ACHN (cell line): ENCODE measurements at regions of chr20 and their contacts with region 1.

Region 1: DNA sequence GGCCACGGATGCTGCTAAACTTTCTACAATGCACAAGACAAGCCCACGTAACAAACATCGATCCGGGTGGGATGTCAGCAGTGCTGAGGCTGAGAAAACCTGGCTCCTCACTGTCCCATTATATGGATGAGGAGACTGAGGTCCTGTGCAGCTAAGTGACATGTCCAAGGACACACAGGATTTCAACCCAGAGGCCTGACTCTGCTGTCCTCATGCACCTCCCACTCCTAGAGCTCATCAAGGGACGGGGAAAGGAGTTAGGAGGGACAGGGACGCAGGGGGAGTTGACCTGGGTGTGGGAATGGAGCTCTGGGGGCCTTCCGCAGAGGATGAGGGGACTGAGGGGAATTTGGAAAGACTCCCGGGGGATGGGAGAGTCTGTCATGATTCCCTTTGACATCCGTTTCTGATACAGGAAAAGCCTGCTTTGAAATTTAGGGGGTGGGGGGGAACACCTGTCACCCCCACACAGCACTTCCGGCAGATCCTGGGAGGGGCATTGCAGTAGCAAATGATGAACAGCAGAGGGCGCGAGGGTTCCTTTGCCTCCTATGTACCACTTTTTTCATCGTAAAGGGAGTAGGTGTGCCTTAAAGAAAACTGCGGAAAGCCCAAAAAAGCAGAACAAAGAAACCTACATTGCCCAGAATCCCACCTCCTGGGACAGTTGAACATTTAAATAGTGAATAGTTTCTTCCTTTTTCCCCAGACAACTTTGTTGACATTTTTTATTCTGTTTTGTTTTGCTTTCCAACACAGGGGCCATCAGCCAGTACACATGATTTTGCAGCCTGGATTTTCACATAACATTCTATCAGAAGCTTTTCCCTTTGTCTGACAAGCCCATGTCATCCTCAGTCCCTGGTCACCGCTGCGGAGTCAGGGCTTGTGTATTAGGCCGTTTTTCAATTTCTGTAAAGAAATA is 48.6 kb downstream of the SLC2A10 start:
- DNase-seq: peak; percentile 51

Region 2: DNA sequence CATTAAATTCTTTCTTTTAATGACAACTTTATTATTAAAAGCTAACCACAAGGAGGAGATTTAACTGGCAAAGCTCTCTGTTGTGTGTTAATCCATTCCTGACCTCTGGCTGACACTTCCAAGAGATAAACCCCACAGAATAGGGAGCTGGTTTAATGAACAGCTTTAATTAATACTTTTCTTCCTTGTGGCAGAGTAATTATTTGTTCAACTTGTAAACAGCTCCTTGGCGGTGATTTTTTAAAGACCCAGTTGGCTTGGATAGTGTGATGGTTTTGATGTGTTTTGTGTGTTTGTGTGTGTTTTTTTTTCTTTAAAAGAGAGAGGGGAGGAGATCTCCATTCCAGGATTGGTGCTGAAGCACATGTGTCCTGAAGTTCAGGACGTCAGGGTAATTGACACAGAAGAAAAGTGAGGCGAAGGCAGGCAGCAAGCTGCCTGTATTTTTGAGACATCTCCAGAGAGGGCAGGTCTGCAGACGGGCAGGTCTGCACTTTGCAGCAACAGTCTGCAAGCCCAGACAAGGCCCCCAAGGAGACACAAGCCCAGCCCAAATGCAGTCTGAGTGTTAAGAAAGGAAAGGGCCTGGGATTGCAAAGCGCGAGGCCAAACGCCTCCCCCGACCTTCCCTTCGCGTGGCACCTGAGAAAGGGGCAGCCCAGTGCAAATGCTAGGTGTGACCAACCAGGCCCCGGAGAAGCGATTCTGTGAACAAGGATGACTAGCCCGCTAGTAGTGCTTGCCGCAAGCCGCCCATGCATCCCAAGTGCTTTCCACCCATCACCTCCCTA is 367.8 kb after region 1 on chr20:
- in situ Hi-C with region 1: loop called (anchors 25 kb)
- DNase-seq: no peak